ENCODE measurements at regions of chr2 and their contacts with region 1.

Region 1: DNA sequence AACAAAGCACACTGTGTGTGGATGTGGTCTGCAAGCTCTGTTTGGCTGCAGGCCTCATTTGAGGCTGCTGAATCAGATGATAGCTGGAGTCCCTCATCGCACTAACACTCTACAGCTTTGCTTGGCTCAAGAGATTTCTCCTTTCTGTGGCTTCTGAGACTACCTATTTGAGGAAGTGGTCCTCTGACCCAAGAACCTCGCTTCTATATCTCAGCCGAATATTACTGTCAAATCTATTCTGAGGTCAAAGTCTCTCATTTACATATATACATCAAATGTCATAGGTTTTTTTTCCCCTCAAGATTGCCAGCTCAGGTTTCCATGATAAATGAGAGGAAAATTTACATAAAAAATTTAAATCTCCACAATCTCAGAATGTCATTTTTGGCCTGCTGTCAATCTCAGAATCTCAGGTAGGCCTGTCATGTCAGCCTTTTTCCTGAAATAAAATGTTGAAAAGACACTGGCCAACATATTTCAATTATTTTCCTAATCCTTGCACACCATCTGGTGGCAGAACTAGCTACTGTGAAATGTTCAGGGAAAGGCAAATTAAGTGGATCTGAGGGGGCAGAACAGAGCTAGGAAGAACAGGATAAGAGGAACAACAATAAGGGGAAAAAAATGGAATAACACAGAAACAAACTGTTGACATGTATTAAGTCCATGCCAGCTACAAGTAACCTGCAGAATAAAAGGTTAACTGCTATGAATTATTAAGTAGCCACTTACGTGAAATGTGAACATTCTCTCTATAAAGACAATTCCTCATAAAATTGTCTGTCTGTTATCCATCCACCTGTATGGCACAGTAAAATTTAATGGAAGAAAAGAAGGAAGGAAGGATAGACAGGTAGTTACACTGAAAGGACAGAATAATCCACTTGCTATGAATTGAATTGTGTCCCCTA is 39.3 kb downstream of the AP1S3 start:
- DNase-seq: no peak
- ATAC-seq: no peak
- H3K4me3 Mint-ChIP-seq: no peak overlapping the region
- H3K27ac Mint-ChIP-seq: no peak overlapping the region
- H3K4me1 Mint-ChIP-seq: peaks cover 3% of the 10 kb centered on the region
- H3K27me3 Mint-ChIP-seq: no peaks in the 10 kb centered on the region

Region 2: GRCh38 chr2:223727562-223727961 is 70.5 kb before region 1 on chr2:
- CTCF ChIA-PET with region 1: interaction called, 10 read pairs
- POLR2A ChIA-PET with region 1: no interaction called
- DNase-seq: peak; percentile 64
- ATAC-seq: peak; percentile 70
- H3K4me3 Mint-ChIP-seq: no peak overlapping the region
- H3K27ac Mint-ChIP-seq: no peak overlapping the region
- H3K4me1 Mint-ChIP-seq: no peaks in the 10 kb centered on the region
- H3K27me3 Mint-ChIP-seq: peaks cover 5% of the 10 kb centered on the region

Region 3: GRCh38 chr2:223760838-223761502 is 37.1 kb before region 1 on chr2:
- CTCF ChIA-PET with region 1: interaction called, 12 read pairs
- POLR2A ChIA-PET with region 1: no interaction called
- DNase-seq: peak; percentile 85
- ATAC-seq: peak; percentile 96
- H3K4me3 Mint-ChIP-seq: peak overlapping the region; percentile 50
- H3K27ac Mint-ChIP-seq: peak overlapping the region; percentile 91
- H3K4me1 Mint-ChIP-seq: peaks cover 33% of the 10 kb centered on the region
- H3K27me3 Mint-ChIP-seq: no peaks in the 10 kb centered on the region

Region 4: GRCh38 chr2:223782629-223783028 is 15.4 kb before region 1 on chr2:
- CTCF ChIA-PET with region 1: no interaction called
- POLR2A ChIA-PET with region 1: no interaction called
- DNase-seq: no peak
- ATAC-seq: no peak
- H3K4me3 Mint-ChIP-seq: no peak overlapping the region
- H3K27ac Mint-ChIP-seq: no peak overlapping the region
- H3K4me1 Mint-ChIP-seq: peaks cover 2% of the 10 kb centered on the region
- H3K27me3 Mint-ChIP-seq: no peaks in the 10 kb centered on the region

Measured in activated CD8-positive, alpha-beta T cell treated with anti-CD3 and anti-CD28 coated beads, Interleukin-2, amount 10 ng/mL, durations not matched to agents 7 days and 5 days (primary cell).